ENCODE measurements at regions of chr10 and their contacts with region 1.

Region 1: DNA sequence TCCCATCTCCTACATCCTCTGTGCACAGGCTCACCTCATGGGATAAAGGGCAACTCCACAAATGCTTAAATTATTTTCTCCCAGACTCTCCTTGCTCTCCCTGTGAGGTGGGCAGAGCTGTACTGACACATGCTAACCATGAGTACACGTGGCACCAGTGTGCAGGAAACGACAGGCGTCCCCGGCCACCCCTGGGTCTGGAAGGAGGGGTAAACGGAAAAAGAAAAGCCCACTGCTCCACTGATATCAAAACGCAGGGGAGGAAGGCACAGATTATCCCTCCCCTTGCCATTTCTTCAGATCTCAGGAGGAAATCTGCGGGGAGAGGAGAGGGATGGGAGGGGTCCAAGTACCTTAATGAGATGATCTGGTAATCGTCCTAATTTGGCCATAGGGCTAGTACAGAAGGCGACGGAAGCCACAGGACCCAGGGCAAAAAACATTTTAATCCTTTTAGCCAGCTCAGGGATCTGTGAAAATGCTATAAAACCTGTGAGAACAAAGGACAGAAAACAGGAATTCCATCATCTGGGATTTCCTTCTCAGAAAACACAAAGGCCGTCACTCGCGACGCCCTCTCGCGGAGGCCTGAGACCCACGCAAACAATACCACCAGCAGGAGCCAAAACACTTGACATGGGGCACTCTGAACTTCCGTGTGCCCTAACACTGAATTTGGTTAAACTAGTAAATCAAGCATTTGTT is 17.8 kb upstream of the CH25H start:
- DNase-seq: no peak
- ATAC-seq: no peak
- H3K4me3 ChIP-seq: no peak overlapping the region
- H3K27ac ChIP-seq: no peak overlapping the region
- H3K4me1 ChIP-seq: no peaks in the 10 kb centered on the region
- H3K27me3 ChIP-seq: no peaks in the 10 kb centered on the region
- CTCF ChIP-seq: no peak

Region 2: DNA sequence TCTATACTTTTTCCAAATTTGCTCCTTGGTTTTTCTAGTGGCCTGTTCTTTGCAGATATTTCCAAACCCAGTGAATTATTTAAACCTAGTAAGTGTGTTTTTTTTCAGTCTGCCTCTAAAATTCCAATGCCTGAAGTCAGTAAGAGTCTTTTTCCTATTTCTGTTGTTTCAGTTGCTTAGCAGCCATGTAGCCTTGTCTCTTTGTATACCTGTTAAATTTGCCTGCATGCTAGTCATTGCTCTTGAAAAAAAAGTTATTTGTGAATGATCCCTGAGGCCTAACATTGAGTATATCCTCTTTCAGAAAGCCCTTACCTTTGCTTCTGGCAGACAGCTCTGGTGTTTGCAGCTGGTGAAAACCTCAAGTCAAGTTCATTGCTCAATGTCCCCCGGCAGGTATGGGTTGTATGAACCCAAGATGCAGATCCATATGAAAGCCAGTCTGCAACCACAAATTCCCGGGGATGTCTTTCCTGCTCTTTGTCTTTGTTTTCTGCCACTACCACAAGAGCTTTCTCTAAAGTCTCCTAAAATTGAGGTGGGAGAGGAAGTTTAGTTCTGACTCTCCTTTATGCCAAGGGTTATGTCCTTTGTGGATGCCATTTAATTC is 53.5 kb before region 1 on chr10:
- CTCF ChIA-PET with region 1: no interaction called
- POLR2A ChIA-PET with region 1: no interaction called
- intact Hi-C with region 1: no loop called
- DNase-seq: no peak
- ATAC-seq: no peak
- H3K4me3 ChIP-seq: no peak overlapping the region
- H3K27ac ChIP-seq: no peak overlapping the region
- H3K4me1 ChIP-seq: no peaks in the 10 kb centered on the region
- H3K27me3 ChIP-seq: no peaks in the 10 kb centered on the region; the same call in 1 of the 2 replicates
- CTCF ChIP-seq: no peak

Region 3: GRCh38 chr10:89189211-89189734 is 35.6 kb before region 1 on chr10:
- CTCF ChIA-PET with region 1: no interaction called
- POLR2A ChIA-PET with region 1: no interaction called
- intact Hi-C with region 1: no loop called
- DNase-seq: no peak
- ATAC-seq: no peak
- H3K4me3 ChIP-seq: no peak overlapping the region
- H3K27ac ChIP-seq: no peak overlapping the region
- H3K4me1 ChIP-seq: no peaks in the 10 kb centered on the region
- H3K27me3 ChIP-seq: no peaks in the 10 kb centered on the region
- CTCF ChIP-seq: no peak

Region 4: GRCh38 chr10:89251409-89252224 is 26.7 kb after region 1 on chr10 and contains the start of gene LIPA:
- CTCF ChIA-PET with region 1: no interaction called
- POLR2A ChIA-PET with region 1: interaction called, 16 read pairs
- intact Hi-C with region 1: no loop called
- DNase-seq: peak; percentile 95
- ATAC-seq: peak; percentile 95
- H3K4me3 ChIP-seq: peak within 1 kb of the TSS; percentile 88
- H3K27ac ChIP-seq: no peak within 1 kb of the TSS; the same call in 1 of the 2 replicates
- H3K4me1 ChIP-seq: peaks cover 5% of the 10 kb centered on the region; the same call in 1 of the 2 replicates
- H3K27me3 ChIP-seq: no peaks in the 10 kb centered on the region
- CTCF ChIP-seq: no peak
- total RNA-seq, gene LIPA: 54.4 and 55.7 TPM in 2 replicates